HEK293T (cell line): ENCODE measurements at regions of chr7 and their contacts with region 1.

Region 1: DNA sequence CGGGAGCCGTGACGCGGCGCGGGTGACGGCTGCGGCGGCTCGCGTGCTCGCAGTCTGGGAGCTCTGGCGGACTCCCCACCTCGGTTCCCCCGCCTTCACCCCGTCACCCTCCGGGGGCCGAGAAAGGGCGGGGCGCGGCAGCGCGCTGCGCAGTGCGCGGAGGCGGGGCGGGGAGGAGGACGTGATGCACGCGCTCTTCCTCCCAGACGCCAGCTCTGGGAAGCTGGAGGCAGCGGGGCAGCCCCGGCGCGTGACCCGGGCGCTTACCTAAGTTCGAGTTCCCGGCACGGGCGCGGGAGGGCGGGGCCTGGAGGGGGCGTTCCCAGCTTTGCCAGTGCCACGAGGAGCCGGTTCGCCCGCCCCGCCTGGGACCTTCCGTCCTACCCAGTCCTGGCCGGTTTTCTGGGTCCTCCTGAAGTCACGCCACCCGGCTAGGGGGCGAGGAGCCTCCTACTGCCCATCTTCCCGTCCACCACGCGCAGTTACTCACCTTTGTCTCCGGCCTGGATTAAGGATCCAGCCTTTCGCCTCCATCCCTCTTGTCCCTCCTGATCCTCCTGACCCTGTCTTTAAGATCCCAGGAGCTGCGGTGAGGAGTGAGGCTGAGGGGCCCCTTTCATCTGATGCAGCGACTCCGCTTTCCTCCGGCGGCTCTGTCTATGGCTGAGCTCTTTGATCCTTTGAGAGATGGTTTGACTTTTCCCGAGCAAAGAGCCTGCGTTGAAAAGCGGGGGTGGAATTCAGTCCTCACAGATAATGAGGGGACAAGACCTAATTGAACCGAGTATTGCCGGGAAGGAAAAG is 470 bp upstream of the NAMPT start:
- DNase-seq: peak; percentile 87

Region 2: GRCh38 chr7:105853931-105854419 is 431.3 kb before region 1 on chr7:
- CTCF ChIA-PET with region 1: no interaction called
- POLR2A ChIA-PET with region 1: no interaction called
- DNase-seq: no peak

Region 3: DNA sequence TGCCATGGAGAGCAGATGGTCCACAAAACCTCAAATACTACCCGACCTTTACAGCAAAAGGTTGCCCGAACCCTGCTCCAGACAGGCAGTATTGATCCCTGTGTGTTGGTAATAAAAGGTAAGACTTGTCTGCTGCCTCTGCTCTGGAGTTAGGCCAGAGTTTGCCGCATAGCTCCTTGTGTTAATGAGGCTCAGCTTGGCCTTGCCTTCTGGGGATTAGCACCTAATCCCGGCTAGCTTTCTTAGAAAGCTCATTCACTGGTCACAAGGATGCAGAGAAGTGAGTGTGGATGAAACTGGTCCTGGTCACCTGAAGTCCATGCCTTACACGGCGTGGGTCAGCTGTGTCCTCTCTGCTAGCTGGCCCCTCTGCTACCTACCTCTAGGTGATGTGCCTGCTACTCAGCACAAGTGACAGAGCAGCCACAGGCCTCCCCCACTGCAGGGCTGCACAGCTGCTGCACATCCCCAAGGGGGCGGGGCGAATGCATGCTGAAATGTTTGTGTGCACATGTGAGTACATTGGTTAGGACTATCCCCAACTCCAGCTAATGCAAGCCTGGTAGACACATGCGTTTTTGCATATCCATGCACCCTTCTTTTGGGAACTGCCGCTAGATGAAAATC is 141.4 kb before region 1 on chr7:
- CTCF ChIA-PET with region 1: no interaction called
- POLR2A ChIA-PET with region 1: no interaction called
- DNase-seq: no peak

Region 4: GRCh38 chr7:106205621-106206222 is 79.5 kb before region 1 on chr7:
- CTCF ChIA-PET with region 1: no interaction called
- POLR2A ChIA-PET with region 1: no interaction called
- DNase-seq: no peak

Region 5: DNA sequence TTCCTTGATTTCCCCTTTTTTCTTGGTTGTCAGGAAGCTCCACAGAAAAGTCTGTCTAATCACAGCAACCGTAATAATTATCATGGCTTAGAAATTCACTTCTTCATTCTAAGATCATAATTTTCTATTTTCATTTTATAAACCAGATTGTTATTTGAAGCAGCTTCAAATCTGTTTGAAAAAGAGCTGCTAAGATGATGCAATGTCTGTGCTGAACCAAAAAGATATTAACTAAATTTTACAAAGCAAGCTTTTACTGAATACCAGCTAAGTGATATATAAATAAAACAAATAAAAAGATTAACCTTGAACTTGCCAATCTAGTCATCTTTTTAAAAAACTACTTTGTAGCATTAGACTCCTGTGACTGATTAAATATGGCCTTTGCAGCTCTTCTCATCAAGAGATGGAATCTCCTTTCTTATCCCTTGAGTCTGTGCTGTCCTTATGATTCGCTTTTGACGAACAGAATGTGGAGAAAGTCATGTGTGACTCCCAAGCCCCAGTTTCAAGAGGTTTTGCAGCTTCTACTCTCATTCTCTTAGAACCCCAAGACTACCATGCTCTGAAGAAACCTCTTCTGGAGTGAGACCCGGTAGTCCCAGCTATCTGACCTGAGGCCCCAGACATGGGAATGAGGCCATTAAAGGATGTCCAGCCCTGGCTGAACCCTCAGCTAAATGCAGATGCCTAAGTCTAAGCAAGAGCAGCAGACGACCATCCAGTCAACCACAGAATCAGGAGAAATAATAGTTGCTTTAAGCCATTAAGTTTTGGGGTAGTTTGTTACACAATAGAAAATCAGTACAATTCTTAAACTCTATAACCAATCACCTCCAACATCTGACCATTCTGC is 14.9 kb before region 1 on chr7:
- CTCF ChIA-PET with region 1: no interaction called
- POLR2A ChIA-PET with region 1: interaction called, 10 read pairs
- DNase-seq: no peak